WTC11 (cell line): ENCODE measurements at regions of chr11 and their contacts with region 1.

Region 1: GRCh38 chr11:119030329-119031049 is at the start of gene SLC37A4:
- DNase-seq: peak; percentile 100
- ATAC-seq: peak; percentile 86
- H3K4me3 Mint-ChIP-seq: peak within 1 kb of the TSS; percentile 76
- H3K27ac Mint-ChIP-seq: peak within 1 kb of the TSS; percentile 64
- H3K4me1 Mint-ChIP-seq: peaks cover 19% of the 10 kb centered on the region
- H3K27me3 Mint-ChIP-seq: no peaks in the 10 kb centered on the region
- CTCF ChIP-seq: peak; percentile 71; the same call in 1 of the 2 replicates
- total RNA-seq, gene SLC37A4: 48.6 to 57.0 TPM (median 54.5 TPM) in 3 replicates

Region 2: GRCh38 chr11:119041821-119042514 is 11.5 kb after region 1 on chr11:
- CTCF ChIA-PET with region 1: interaction called, 10 read pairs
- POLR2A ChIA-PET with region 1: no interaction called
- DNase-seq: no peak
- ATAC-seq: no peak
- H3K4me3 Mint-ChIP-seq: no peak overlapping the region
- H3K27ac Mint-ChIP-seq: peak overlapping the region; percentile 48
- H3K4me1 Mint-ChIP-seq: peaks cover 21% of the 10 kb centered on the region
- H3K27me3 Mint-ChIP-seq: no peaks in the 10 kb centered on the region
- CTCF ChIP-seq: no peak